ENCODE measurements at regions of chr1 and their contacts with region 1.

Region 1: DNA sequence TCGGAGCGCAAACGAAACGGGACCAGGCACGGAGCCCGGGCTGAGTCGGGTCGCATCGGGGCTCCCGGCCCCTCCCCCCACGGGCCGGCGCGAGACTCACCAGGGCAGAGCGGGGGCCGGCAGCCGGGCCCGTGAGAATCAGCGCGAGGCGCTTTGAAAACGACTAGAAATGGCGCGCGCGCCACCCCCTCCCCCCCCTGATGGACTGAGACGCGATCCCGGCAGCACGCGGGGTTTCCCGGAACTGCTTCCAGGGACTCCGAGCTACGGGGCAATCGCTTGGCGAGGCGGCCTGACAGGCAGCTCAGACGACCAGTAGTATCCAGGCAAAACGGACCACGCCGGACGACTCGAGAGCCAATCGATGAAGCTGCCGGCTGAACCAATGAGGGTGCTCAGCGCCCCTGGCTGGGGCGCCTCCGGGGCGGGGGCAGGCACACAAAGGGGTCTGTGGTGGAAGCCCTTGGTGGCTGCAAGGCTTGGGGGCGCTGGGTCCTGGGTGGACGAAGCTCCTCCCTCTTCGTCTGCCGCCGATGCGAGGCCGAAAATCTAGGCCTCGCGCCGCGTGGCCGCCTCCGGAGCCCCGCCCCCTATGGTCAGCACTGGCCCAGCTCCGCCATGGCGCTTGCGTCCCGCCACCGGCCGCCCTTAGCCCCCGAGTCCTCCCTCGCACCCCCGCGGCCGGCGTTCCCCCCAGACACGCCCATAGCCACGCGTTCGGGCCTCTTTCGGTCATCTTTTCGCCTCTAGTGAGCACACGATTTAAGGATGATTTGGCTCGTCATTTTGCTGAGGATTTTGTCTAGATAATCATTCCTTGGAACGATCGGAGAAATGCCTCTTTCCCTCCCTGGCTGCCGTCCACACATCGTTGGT is at the start of gene HNRNPR:
- DNase-seq: peak; percentile 98
- H3K4me3 Mint-ChIP-seq: peak within 1 kb of the TSS; percentile 83
- H3K27ac Mint-ChIP-seq: peak within 1 kb of the TSS; percentile 96
- H3K4me1 Mint-ChIP-seq: peaks cover 13% of the 10 kb centered on the region
- H3K27me3 Mint-ChIP-seq: no peaks in the 10 kb centered on the region
- CTCF ChIP-seq: no peak
- total RNA-seq, gene HNRNPR: 126 TPM in 2 replicates

Region 2: GRCh38 chr1:23123528-23123927 is 220.8 kb before region 1 on chr1:
- CTCF ChIA-PET with region 1: interaction called, 10 read pairs
- intact Hi-C with region 1: no loop called
- DNase-seq: no peak
- H3K4me3 Mint-ChIP-seq: no peak overlapping the region
- H3K27ac Mint-ChIP-seq: no peak overlapping the region
- H3K4me1 Mint-ChIP-seq: peaks cover 22% of the 10 kb centered on the region
- H3K27me3 Mint-ChIP-seq: no peaks in the 10 kb centered on the region
- CTCF ChIP-seq: no peak

Region 3: GRCh38 chr1:23303524-23303923 is 40.8 kb before region 1 on chr1:
- CTCF ChIA-PET with region 1: interaction called, 3 read pairs
- intact Hi-C with region 1: loop called (anchors 5 kb)
- DNase-seq: no peak
- H3K4me3 Mint-ChIP-seq: no peak overlapping the region
- H3K27ac Mint-ChIP-seq: no peak overlapping the region
- H3K4me1 Mint-ChIP-seq: no peaks in the 10 kb centered on the region
- H3K27me3 Mint-ChIP-seq: no peaks in the 10 kb centered on the region
- CTCF ChIP-seq: no peak

Region 4: GRCh38 chr1:23357138-23357908 is 13.0 kb after region 1 on chr1:
- CTCF ChIA-PET with region 1: no interaction called
- intact Hi-C with region 1: no loop called
- DNase-seq: no peak
- H3K4me3 Mint-ChIP-seq: no peak overlapping the region
- H3K27ac Mint-ChIP-seq: no peak overlapping the region
- H3K4me1 Mint-ChIP-seq: no peaks in the 10 kb centered on the region
- H3K27me3 Mint-ChIP-seq: no peaks in the 10 kb centered on the region
- CTCF ChIP-seq: no peak

Region 5: DNA sequence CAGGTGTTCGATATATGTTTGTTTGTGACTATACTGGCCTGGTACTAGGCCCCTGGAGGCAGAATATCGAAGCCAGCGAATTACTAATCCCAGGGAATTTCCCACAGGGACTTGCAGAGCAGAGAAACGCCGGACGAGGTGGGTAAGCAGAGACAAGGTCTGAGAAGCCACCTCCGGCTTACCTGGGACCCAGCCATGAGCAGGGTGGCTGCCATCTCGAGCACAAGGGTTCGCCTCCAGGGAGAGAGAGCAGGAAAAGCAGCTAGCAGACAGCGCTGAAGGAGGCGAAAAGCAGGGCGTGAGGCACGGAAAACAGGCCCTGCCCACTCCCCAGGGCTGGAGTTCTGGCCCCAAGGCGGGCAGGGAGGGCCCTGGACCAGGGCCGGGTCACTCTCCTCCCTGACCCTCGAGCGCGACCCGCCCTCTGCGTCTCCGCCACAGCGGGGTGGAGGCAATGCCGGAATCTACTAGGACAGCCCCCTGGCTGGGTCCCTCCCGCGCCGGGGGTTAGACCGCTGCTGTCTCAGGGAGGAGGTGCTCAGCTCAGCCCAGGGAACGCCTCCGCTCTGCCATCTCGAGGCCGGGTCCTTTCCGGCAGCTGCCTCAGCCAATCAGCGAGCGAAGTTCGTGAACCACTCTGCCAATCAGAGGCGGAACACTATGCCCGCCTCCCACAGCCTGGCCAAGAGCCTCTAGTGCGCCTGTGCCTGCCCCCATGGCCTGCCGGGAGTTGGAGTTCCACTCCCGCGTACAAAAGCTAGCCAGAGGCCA is 23.6 kb after region 1 on chr1:
- CTCF ChIA-PET with region 1: interaction called, 16 read pairs
- intact Hi-C with region 1: no loop called
- DNase-seq: peak; percentile 94
- H3K4me3 Mint-ChIP-seq: peak overlapping the region; percentile 91
- H3K27ac Mint-ChIP-seq: peak overlapping the region; percentile 63
- H3K4me1 Mint-ChIP-seq: peaks cover 33% of the 10 kb centered on the region
- H3K27me3 Mint-ChIP-seq: no peaks in the 10 kb centered on the region
- CTCF ChIP-seq: no peak

Region 6: DNA sequence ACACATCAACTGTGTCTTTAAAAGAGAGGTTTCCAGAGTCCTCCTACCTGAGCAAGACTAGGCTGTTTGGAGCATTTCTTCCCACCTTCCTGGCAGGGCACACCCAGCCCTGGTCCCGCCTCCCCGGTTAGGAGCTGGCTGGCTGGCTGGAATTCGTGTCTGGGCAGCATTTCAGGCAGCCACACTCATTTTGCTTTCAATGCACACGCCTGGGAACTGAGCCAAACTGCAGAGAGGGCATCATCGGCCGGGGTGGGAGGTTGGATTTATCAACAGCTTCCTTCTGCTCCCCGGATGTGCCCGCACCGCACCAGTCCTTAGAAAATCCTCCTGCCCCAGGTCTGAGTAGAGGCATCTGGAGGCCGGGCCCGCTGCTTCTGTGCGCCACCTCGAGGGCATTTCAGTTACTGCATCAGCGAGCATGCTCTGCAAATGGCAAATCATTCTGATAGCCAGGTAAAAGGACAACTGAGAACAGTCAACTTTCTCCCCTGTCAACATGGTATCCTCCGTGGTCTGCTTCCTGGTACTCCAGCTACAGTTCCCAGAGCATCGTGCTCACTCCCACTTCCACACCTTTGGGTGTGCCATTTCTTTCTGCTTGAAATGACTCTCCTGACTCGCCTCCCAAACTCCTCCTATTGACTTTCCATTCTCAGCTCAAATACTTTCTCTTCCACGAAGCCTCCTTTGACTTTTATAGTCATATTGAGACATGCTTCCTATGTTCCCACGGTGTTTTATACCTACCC is 59.6 kb after region 1 on chr1:
- CTCF ChIA-PET with region 1: interaction called, 19 read pairs
- intact Hi-C with region 1: no loop called
- DNase-seq: peak; percentile 90
- H3K4me3 Mint-ChIP-seq: peak overlapping the region; percentile 7
- H3K27ac Mint-ChIP-seq: no peak overlapping the region
- H3K4me1 Mint-ChIP-seq: peaks cover 26% of the 10 kb centered on the region
- H3K27me3 Mint-ChIP-seq: no peaks in the 10 kb centered on the region
- CTCF ChIP-seq: peak; percentile 81

Measured in Calu3 (cell line).